Breast epithelium (tissue), 4 donors: ENCODE measurements at regions of chr7 and their contacts with region 1.

Region 1: DNA sequence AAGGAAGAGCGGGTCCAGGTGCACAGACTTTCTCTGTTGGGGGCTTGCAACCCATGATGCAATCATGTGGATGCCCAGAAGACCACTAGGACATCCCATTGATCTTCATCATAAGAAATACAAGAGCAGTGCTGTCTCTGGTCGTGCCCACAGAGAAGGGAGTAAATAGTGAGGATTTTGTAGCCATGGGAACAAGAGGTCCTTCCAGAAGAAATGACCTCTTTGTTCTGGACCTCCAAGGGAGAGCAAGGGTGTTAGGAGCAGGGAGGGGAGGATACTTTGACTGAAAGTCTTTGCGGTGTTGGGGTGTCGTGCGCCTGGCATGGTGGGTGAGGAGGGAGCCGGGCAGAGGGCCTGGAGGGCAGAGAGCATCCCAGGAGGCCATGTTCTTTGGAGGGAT is 55.0 kb upstream of the EN2 start:
- DNase-seq: no peak
- H3K4me3 ChIP-seq: no peak overlapping the region
- H3K27ac ChIP-seq: no peak overlapping the region
- H3K4me1 ChIP-seq: no peaks in the 10 kb centered on the region
- H3K27me3 ChIP-seq: peaks cover 0 to 63% of the 10 kb centered on the region in 2 donors
- CTCF ChIP-seq: no peak
- POLR2A ChIP-seq: no peak

Region 2: DNA sequence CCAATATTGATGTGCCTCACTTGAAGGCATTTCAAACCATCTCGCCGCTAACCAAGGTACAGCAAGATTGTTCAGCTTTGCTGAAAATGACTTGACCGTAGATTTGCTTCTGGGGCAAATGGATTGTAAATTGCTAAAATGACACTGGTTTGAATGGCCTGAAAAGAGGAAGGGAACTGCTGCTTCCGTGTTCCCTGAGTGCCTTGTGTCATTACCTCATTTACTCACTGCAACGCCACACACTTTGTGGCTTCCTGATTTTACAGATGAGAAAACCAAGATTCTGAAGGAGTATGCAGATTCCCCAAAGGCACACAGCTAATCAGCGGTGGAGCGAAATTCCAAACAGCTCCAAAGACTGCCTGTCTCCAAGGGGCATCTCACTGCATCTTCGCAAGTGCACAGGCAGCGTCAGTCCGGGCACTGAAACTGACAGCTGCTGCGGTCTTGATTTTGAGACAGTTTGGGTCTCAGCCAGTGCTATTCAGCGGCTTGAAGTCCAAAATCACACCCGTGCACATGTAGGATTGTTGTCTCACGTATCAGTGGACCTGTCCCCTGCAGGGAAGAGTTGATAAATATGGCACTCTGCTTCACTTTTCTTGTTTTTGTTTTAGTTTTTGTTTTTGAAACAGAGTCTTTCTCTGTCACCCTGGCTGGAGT is 1059.8 kb before region 1 on chr7:
- intact Hi-C with region 1: loop called (anchors 5 kb)
- DNase-seq: no peak
- H3K4me3 ChIP-seq: no peak overlapping the region
- H3K27ac ChIP-seq: no peak overlapping the region
- H3K4me1 ChIP-seq: no peaks in the 10 kb centered on the region
- H3K27me3 ChIP-seq: no peaks in the 10 kb centered on the region
- CTCF ChIP-seq: no peak
- POLR2A ChIP-seq: no peak